ENCODE measurements at regions of chr13 and their contacts with region 1.

Region 1: GRCh38 chr13:46622630-46623256 is 69.8 kb downstream of the LRCH1 start:
- DNase-seq: peak in 7 of 10 donors; percentile 12 to 84 (median 44)

Region 2: GRCh38 chr13:46553886-46554858 is 68.6 kb before region 1 on chr13:
- intact Hi-C with region 1: loop called (anchors 10 kb)
- DNase-seq: peak in 8 of 10 donors; percentile 23 to 93 (median 60)

Measured in posterior cingulate gyrus (tissue), 11 donors.